B cell (primary cell): ENCODE measurements at regions of chr1 and their contacts with region 1.

Region 1: DNA sequence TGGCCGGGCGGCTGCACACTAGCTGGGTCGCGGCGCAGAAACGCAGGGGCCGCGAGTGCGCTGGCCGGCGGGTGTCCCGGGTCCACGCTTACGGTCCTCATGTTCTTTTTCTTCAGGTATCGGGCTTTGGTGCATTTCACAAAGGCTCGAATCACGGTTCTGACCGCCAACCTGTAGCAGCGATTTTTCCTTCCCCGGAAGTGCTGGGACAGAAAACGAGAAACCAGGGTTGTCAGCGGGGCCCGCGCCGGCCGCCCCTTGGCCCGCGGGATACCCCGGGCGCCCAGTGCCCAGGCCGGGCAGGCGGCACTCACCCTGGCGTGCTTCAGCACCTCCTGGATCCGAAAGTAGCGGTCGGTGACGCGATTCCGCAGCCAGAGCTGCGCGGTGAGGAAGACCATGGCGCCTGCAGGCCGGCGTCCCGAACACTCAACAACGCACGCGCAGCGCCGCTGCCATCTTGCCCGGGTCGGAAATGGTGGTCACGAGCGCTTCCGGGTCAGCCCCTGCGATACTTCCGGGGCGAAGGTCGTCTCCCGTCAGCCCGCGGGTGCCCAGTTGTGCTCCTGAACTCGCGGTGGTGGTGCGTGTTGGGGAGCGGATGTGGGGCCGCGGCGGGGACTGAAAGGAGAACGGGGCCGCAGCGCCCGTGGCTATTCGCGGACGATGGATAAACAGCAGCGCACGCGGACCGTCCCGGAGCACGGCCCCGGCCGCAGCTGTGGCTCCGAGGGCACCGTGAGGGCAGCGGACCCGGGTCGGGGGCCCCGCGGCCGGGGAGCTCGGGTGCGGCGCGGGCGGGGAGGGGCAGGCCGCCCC is at the start of gene MRPL20:
- DNase-seq: peak; percentile 96
- ATAC-seq: peak; percentile 95
- H3K4me3 ChIP-seq: peak within 1 kb of the TSS; percentile 70 to 98 (median 90)
- H3K4me3 Mint-ChIP-seq: peak within 1 kb of the TSS; percentile 90
- H3K27ac ChIP-seq: peak within 1 kb of the TSS; percentile 69 to 87
- H3K27ac Mint-ChIP-seq: peak within 1 kb of the TSS; percentile 91
- H3K4me1 ChIP-seq: peaks cover 21 to 26% of the 10 kb centered on the region in 2 donors
- H3K4me1 Mint-ChIP-seq: peaks cover 37% of the 10 kb centered on the region
- H3K27me3 ChIP-seq: no peaks in the 10 kb centered on the region
- H3K27me3 Mint-ChIP-seq: no peaks in the 10 kb centered on the region
- CTCF ChIP-seq: peak; percentile 15
- total RNA-seq, gene MRPL20: 119 and 129 TPM in 2 replicates

Region 2: GRCh38 chr1:1441002-1441888 is 34.2 kb after region 1 on chr1:
- CTCF ChIA-PET with region 1: interaction called, 5 read pairs
- POLR2A ChIA-PET with region 1: no interaction called
- intact Hi-C with region 1: loop called (anchors 2 kb)
- DNase-seq: peak; percentile 69
- ATAC-seq: peak; percentile 92
- H3K4me3 ChIP-seq: no peak overlapping the region
- H3K4me3 Mint-ChIP-seq: no peak overlapping the region
- H3K27ac ChIP-seq: no peak overlapping the region
- H3K27ac Mint-ChIP-seq: no peak overlapping the region
- H3K4me1 ChIP-seq: peaks cover 9 to 15% of the 10 kb centered on the region in 2 donors
- H3K4me1 Mint-ChIP-seq: peaks cover 6% of the 10 kb centered on the region
- H3K27me3 ChIP-seq: peaks cover 0 to 34% (median 15%) of the 10 kb centered on the region in 4 experiments
- H3K27me3 Mint-ChIP-seq: peaks cover 17% of the 10 kb centered on the region
- CTCF ChIP-seq: peak; percentile 83